Right cardiac atrium (tissue), 5 donors: ENCODE measurements at regions of chr20 and their contacts with region 1.

Region 1: GRCh38 chr20:32779500-32780211 is 17.5 kb downstream of the DNMT3B start:
- DNase-seq: no peak
- ATAC-seq: no peak
- H3K4me3 ChIP-seq: no peak overlapping the region
- H3K27ac ChIP-seq: no peak overlapping the region
- H3K4me1 ChIP-seq: peaks cover 4% of the 10 kb centered on the region
- H3K27me3 ChIP-seq: no peaks in the 10 kb centered on the region

Region 2: GRCh38 chr20:32674362-32674789 is 105.3 kb before region 1 on chr20:
- intact Hi-C with region 1: loop called (anchors 2 to 5 kb)
- DNase-seq: no peak
- ATAC-seq: no peak
- H3K4me3 ChIP-seq: no peak overlapping the region
- H3K27ac ChIP-seq: no peak overlapping the region
- H3K4me1 ChIP-seq: no peaks in the 10 kb centered on the region
- H3K27me3 ChIP-seq: no peaks in the 10 kb centered on the region